ENCODE measurements at regions of chr3 and their contacts with region 1.

Region 1: GRCh38 chr3:67113802-67114407 is 115.8 kb downstream of the KBTBD8 start:
- DNase-seq: peak; percentile 72

Region 2: DNA sequence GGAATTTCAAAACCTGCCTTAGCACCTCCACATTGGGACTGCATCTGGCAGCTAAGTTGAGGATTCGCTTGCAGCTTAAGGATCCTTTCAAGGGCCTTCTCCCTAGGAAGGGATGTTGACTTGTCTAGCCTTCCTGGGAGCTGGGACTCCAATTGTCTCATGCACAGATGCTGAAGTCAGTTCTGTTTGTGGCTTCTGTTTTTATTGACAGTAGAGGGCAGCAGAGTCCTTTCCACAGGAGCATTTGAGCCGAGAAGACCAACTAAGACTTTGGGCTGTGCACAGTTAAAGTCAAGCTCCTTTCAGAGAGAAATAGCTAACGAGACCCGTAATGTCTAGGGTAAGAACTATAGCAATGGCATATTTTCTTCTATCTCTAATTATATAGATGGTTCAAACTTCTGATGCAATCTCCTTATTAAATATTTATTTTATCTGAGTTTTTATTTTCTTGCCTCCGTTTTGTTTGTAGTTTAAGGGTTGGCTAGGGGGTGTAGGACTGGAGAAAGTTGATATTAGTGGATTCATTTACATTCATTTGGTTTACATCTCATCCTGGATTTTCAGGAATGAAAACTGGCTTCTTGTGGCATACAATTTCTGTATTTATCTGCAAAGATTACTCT is 175.5 kb before region 1 on chr3:
- CTCF ChIA-PET with region 1: interaction called, 11 read pairs
- POLR2A ChIA-PET with region 1: no interaction called
- DNase-seq: peak; percentile 56

Region 3: GRCh38 chr3:67123914-67124313 is 10.0 kb after region 1 on chr3:
- CTCF ChIA-PET with region 1: no interaction called
- POLR2A ChIA-PET with region 1: no interaction called
- DNase-seq: no peak

Region 4: DNA sequence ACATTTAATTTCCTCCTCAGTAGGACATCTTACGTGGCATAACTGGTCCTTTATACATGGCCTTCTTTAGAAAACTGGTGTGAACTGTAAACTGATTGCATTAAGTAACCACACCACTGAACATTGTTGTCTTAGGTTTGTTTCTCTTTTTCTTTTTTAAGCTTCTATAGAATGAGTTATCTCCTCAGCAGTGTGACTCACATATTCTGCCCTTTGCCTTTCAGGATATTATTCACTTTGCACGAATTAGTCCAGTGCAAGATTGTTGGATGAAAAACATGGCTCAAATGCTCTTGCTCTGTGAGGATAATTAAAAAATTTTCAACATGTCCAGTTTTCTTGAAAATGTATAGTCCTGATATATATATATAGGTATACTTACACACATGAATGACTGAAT is 31.8 kb after region 1 on chr3:
- CTCF ChIA-PET with region 1: no interaction called
- POLR2A ChIA-PET with region 1: no interaction called
- DNase-seq: no peak

Region 5: GRCh38 chr3:67497746-67498145 is 383.8 kb after region 1 on chr3:
- CTCF ChIA-PET with region 1: no interaction called
- POLR2A ChIA-PET with region 1: no interaction called
- DNase-seq: no peak

Measured in HEK293T (cell line).